CD8-positive, alpha-beta T cell (primary cell): ENCODE measurements at regions of chr14 and their contacts with region 1.

Region 1: DNA sequence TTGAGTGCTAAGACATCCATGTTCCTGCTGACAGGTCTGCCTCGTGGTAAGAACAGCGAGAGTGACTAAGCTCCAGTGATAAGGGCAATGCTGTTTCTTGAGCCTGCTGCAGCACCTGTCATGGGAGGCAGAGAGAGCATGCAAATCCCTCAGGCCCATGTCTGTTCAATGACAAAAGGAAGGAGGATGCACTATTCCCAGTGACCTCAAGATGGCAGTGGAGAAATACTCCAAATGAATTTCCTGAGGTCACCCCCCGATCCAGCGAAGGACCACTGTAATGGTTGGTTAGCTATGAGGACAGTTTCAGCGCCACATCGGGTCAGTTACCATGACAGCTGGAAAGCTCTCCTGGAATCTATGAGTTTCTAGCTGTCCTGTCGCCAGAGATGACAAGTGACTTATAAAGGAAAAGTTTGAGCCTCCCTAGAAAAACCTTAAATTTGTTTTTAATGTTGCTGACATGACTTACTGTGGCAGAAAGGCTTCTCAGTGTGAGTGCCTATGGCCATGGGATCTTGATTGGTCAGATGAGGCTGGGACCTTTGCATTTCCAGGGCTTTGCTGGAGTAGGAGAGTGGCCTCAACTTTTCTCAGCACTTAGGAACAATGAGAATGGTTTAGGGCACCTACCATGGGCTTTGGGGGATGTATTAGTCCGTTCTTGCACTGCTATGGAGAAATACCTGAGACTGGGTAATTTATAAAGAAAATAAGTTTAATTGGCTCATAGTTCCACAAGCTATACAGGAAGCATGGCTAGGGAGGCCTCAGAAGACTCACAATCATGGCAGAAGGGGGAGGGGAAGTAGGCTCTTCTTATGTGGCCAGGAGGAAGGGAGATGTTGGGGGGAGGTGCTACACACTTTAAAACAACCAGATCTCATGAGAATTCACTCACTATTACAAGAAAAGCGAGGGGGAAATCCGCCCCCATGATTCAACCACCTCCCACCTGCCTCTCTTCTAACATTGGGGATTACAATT is 88.0 kb upstream of the TMEM260 start:
- DNase-seq: peak in 7 of 9 experiments; percentile 16 to 62 (median 29)
- ATAC-seq: peak; percentile 68
- H3K4me3 ChIP-seq: no peak overlapping the region
- H3K4me3 Mint-ChIP-seq: peak overlapping the region; percentile 40
- H3K27ac ChIP-seq: no peak overlapping the region
- H3K27ac Mint-ChIP-seq: no peak overlapping the region
- H3K4me1 ChIP-seq: peaks cover 6% of the 10 kb centered on the region
- H3K4me1 Mint-ChIP-seq: peaks cover 13% of the 10 kb centered on the region
- H3K27me3 ChIP-seq: no peaks in the 10 kb centered on the region
- H3K27me3 Mint-ChIP-seq: no peaks in the 10 kb centered on the region
- CTCF ChIP-seq: peak; percentile 52

Region 2: DNA sequence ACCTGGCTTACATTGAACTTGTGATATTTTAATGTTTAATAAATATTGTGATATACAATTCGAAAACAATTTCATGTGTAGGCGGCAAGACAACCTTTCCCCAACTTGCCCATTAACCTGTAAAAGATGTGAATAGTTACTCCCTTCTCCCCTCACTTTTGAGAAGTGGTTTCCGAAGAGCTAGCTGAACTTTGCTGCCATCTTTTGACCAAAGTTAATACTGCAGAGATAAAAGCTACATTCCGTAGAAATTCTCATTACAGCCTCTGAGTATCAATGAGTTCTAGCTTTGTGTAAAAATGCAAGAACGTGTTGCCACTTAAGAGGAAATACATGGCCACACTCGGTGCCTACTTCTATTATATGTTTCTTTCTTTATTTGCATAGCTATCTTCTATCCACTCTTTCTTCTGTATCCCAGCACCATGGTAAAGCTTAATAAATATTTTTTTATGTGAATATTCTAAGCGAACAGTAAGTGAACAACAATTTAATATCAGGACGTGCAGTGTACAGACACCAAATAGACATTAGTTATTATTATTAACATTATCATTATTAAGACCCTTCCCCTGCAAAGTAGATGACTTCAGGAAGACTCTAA is 17.1 kb before region 1 on chr14:
- CTCF ChIA-PET with region 1: interaction called, 16 read pairs
- POLR2A ChIA-PET with region 1: no interaction called
- intact Hi-C with region 1: no loop called
- DNase-seq: peak in 2 of 9 experiments; percentile 48 to 56
- ATAC-seq: no peak
- H3K4me3 ChIP-seq: no peak overlapping the region
- H3K4me3 Mint-ChIP-seq: no peak overlapping the region
- H3K27ac ChIP-seq: no peak overlapping the region
- H3K27ac Mint-ChIP-seq: no peak overlapping the region
- H3K4me1 ChIP-seq: no peaks in the 10 kb centered on the region
- H3K4me1 Mint-ChIP-seq: no peaks in the 10 kb centered on the region
- H3K27me3 ChIP-seq: no peaks in the 10 kb centered on the region
- H3K27me3 Mint-ChIP-seq: peaks cover 8% of the 10 kb centered on the region
- CTCF ChIP-seq: peak; percentile 74

Region 3: GRCh38 chr14:56579345-56580220 is 88.0 kb after region 1 on chr14 and contains the start of gene TMEM260:
- CTCF ChIA-PET with region 1: interaction called, 3 read pairs
- POLR2A ChIA-PET with region 1: no interaction called
- intact Hi-C with region 1: loop called in 1 of 2 experiments (anchors 5 kb)
- DNase-seq: peak; percentile 84 to 95 (median 91)
- ATAC-seq: peak; percentile 93
- H3K4me3 ChIP-seq: peak within 1 kb of the TSS; percentile 74 to 83
- H3K4me3 Mint-ChIP-seq: peak within 1 kb of the TSS; percentile 90
- H3K27ac ChIP-seq: peak within 1 kb of the TSS; percentile 72 to 75
- H3K27ac Mint-ChIP-seq: peak within 1 kb of the TSS; percentile 94
- H3K4me1 ChIP-seq: peaks cover 27% of the 10 kb centered on the region
- H3K4me1 Mint-ChIP-seq: peaks cover 40% of the 10 kb centered on the region
- H3K27me3 ChIP-seq: no peaks in the 10 kb centered on the region
- H3K27me3 Mint-ChIP-seq: peaks cover 2% of the 10 kb centered on the region
- CTCF ChIP-seq: peak; percentile 82
- total RNA-seq, gene TMEM260: 4.3 to 6.4 TPM

Region 4: GRCh38 chr14:57199921-57200320 is 708.3 kb after region 1 on chr14:
- CTCF ChIA-PET with region 1: interaction called, 4 read pairs
- POLR2A ChIA-PET with region 1: no interaction called
- intact Hi-C with region 1: loop called (anchors 1 to 2 kb)
- DNase-seq: no peak
- ATAC-seq: no peak
- H3K4me3 ChIP-seq: no peak overlapping the region
- H3K4me3 Mint-ChIP-seq: no peak overlapping the region
- H3K27ac ChIP-seq: no peak overlapping the region
- H3K27ac Mint-ChIP-seq: no peak overlapping the region
- H3K4me1 ChIP-seq: no peaks in the 10 kb centered on the region
- H3K4me1 Mint-ChIP-seq: no peaks in the 10 kb centered on the region
- H3K27me3 ChIP-seq: no peaks in the 10 kb centered on the region
- H3K27me3 Mint-ChIP-seq: peaks cover 5% of the 10 kb centered on the region
- CTCF ChIP-seq: no peak

Region 5: GRCh38 chr14:57317316-57317715 is 825.7 kb after region 1 on chr14:
- CTCF ChIA-PET with region 1: interaction called, 37 read pairs
- POLR2A ChIA-PET with region 1: no interaction called
- intact Hi-C with region 1: loop called (anchors 1 kb)
- DNase-seq: peak; percentile 39 to 81 (median 72)
- ATAC-seq: no peak
- H3K4me3 ChIP-seq: no peak overlapping the region
- H3K4me3 Mint-ChIP-seq: no peak overlapping the region
- H3K27ac ChIP-seq: no peak overlapping the region
- H3K27ac Mint-ChIP-seq: no peak overlapping the region
- H3K4me1 ChIP-seq: no peaks in the 10 kb centered on the region
- H3K4me1 Mint-ChIP-seq: peaks cover 3% of the 10 kb centered on the region
- H3K27me3 ChIP-seq: no peaks in the 10 kb centered on the region
- H3K27me3 Mint-ChIP-seq: peaks cover 6% of the 10 kb centered on the region
- CTCF ChIP-seq: peak; percentile 94